Transverse colon (tissue), 4 donors: ENCODE measurements at regions of chr11 and their contacts with region 1.

Region 1: GRCh38 chr11:125494974-125495725 is 915 bp downstream of the FEZ1 start:
- DNase-seq: no peak
- H3K4me3 ChIP-seq: peak overlapping the region; percentile 26 to 57 (median 46)
- H3K27ac ChIP-seq: peak overlapping the region; percentile 66 to 85 (median 80)
- H3K4me1 ChIP-seq: peaks cover 0 to 15% (median 7%) of the 10 kb centered on the region in 4 donors
- H3K27me3 ChIP-seq: peaks cover 37% of the 10 kb centered on the region
- CTCF ChIP-seq: no peak
- EP300 ChIP-seq: no peak
- POLR2A ChIP-seq: no peak

Region 2: DNA sequence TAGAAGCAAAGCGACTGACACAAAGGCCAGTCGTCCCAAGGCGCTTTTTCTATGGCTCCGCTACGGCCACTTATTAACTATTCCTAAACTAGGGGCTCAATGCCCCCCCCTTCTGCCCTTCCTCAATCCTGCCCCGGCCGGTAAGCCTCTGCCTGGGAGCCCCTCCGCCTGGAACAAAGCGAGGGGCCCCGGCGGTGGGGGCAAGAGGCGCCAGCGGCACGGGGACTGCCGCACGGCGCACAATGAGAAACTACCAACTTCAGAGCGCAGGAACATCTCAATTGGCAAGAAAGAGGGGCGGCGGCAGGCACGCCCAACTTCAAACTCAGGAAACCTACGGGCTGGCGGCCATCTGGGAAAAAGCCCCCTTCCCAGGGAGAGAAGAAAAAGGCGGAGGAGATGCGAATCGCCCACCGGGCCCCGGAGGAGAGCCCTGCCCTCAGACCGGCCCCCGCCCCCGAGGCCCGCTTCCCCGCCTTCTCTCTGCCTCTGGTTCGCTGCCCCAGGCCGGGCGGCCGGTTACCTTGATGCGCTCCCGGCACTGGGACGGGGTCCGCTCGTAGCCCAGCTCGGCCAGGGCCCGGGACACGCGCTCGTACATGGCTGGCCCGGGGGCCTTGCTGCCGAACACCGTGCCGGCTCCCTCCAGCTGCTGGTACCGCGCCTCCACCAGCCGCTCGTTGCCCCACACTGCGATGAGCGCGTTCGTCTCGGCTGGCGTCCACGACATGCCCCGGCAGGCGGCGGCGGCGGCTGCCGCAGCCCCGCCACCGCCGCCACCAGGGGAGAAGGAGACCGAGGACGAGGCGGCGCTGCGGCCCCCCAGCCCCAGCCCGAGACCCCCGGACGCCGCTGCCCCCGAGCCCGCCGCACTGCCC is 695.6 kb before region 1 on chr11:
- in situ Hi-C with region 1: no loop called
- intact Hi-C with region 1: loop called (anchors 5 kb)
- DNase-seq: peak; percentile 41
- H3K4me3 ChIP-seq: peak overlapping the region; percentile 84 to 97 (median 90)
- H3K27ac ChIP-seq: peak overlapping the region; percentile 94 to 98 (median 96)
- H3K4me1 ChIP-seq: peaks cover 5 to 31% (median 20%) of the 10 kb centered on the region in 4 donors
- H3K27me3 ChIP-seq: no peaks in the 10 kb centered on the region
- CTCF ChIP-seq: peak in 1 of 5 experiments; percentile 3
- EP300 ChIP-seq: no peak
- POLR2A ChIP-seq: no peak

Region 3: GRCh38 chr11:125443767-125444311 is 51.3 kb before region 1 on chr11:
- in situ Hi-C with region 1: no loop called
- intact Hi-C with region 1: no loop called
- DNase-seq: no peak
- H3K4me3 ChIP-seq: no peak overlapping the region
- H3K27ac ChIP-seq: no peak overlapping the region
- H3K4me1 ChIP-seq: no peaks in the 10 kb centered on the region
- H3K27me3 ChIP-seq: no peaks in the 10 kb centered on the region
- CTCF ChIP-seq: no peak
- EP300 ChIP-seq: no peak
- POLR2A ChIP-seq: no peak

Region 4: DNA sequence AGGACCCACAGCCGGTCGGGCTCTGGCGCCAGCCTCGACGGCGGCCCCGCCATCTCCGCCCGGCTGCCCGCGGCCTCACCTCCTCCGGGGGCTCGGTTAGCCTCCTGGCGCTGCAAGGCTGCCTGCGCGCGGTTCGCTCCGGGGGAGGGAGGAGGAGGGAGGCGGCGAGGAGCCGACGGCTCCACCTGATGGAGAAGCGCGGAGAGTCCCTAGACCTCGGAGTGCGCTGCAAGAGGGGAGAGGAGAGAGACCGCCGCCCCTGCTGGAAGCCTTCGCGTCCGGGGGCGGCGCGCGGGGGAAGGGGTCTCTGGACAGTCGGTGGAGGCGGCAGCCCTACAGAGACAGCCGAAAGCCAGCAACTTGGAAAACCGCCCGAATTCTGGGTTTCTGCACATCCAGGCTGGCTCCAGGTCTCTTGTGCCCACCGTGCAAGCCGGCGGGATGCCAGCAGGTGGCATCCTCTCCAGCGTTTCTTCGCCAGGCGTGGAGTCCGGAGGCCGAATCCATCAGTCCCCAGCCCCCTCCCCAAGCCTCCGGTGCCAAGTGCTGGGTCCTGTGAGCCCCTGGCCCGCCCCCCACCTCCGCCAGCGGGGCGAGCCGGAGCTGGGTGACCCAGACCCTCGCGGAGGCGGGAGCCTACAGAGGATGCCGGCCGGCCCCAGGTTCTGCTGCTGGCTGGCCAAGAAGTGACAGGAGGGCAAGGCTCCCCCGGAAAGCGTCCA is 1508.3 kb after region 1 on chr11:
- in situ Hi-C with region 1: no loop called
- intact Hi-C with region 1: loop called (anchors 5 kb)
- DNase-seq: no peak
- H3K4me3 ChIP-seq: peak overlapping the region in 1 of 4 donors; percentile 3
- H3K27ac ChIP-seq: no peak overlapping the region
- H3K4me1 ChIP-seq: peaks cover 0 to 15% (median 12%) of the 10 kb centered on the region in 4 donors
- H3K27me3 ChIP-seq: peaks cover 82% of the 10 kb centered on the region
- CTCF ChIP-seq: peak in 4 of 5 experiments; percentile 7 to 36 (median 21)
- EP300 ChIP-seq: no peak
- POLR2A ChIP-seq: no peak